Transverse colon (tissue), 4 donors: ENCODE measurements at regions of chr9 and their contacts with region 1.

Region 1: GRCh38 chr9:101311758-101312420 is 72.9 kb downstream of the BAAT start:
- DNase-seq: no peak
- H3K4me3 ChIP-seq: no peak overlapping the region
- H3K27ac ChIP-seq: no peak overlapping the region
- H3K4me1 ChIP-seq: no peaks in the 10 kb centered on the region
- H3K27me3 ChIP-seq: no peaks in the 10 kb centered on the region
- CTCF ChIP-seq: peak; percentile 58 to 73 (median 64)
- EP300 ChIP-seq: no peak
- POLR2A ChIP-seq: no peak

Region 2: GRCh38 chr9:100598641-100599145 is 713.2 kb before region 1 on chr9:
- in situ Hi-C with region 1: loop called in 2 of 4 experiments (anchors 25 kb)
- intact Hi-C with region 1: no loop called
- DNase-seq: peak; percentile 90
- H3K4me3 ChIP-seq: peak overlapping the region; percentile 34 to 47 (median 38)
- H3K27ac ChIP-seq: peak overlapping the region in 3 of 4 donors; percentile 23 to 48 (median 41)
- H3K4me1 ChIP-seq: peaks cover 0 to 8% (median 5%) of the 10 kb centered on the region in 4 donors
- H3K27me3 ChIP-seq: no peaks in the 10 kb centered on the region
- CTCF ChIP-seq: no peak
- EP300 ChIP-seq: no peak
- POLR2A ChIP-seq: no peak

Region 3: GRCh38 chr9:100700689-100701318 is 611.1 kb before region 1 on chr9:
- in situ Hi-C with region 1: loop called in 3 of 4 experiments (anchors 10 to 25 kb)
- intact Hi-C with region 1: no loop called
- DNase-seq: no peak
- H3K4me3 ChIP-seq: no peak overlapping the region
- H3K27ac ChIP-seq: no peak overlapping the region
- H3K4me1 ChIP-seq: no peaks in the 10 kb centered on the region
- H3K27me3 ChIP-seq: no peaks in the 10 kb centered on the region
- CTCF ChIP-seq: peak in 3 of 5 experiments; percentile 20 to 32 (median 29)
- EP300 ChIP-seq: no peak
- POLR2A ChIP-seq: no peak

Region 4: DNA sequence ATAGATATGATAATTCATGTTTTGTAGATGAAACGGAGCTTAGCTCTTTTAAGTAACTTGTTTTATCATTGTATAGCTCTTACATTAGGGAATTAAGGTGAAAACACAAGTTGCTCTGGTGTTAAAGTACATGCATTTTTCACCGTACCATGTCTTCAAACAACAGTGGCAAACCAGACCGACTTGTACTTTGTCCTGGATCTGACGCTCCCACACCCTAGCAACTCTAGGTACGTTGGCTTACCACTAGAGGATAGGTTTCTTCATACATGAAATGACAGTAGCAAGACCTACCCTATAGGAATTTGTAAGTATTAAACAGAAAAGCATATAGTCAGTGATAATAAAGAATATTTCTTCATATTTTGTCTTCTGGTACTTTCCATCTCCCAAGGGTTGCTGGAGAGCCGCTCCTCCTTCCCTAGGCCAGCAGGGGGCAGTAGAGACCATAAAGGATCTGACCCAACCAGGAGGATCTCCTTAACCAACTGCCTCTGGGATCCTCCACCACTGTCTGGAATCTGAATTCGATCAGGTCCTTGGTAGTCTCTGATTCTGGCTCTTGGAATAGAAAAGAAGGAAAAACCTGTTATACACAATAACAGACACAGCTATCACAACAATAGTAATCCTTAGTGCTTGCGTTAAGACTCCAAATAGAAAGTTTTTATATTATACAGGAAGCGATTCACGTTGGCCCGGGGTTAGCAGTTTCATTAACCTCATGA is 597.4 kb before region 1 on chr9:
- in situ Hi-C with region 1: loop called (anchors 10 to 25 kb)
- intact Hi-C with region 1: no loop called
- DNase-seq: peak; percentile 50
- H3K4me3 ChIP-seq: no peak overlapping the region
- H3K27ac ChIP-seq: no peak overlapping the region
- H3K4me1 ChIP-seq: no peaks in the 10 kb centered on the region
- H3K27me3 ChIP-seq: no peaks in the 10 kb centered on the region
- CTCF ChIP-seq: peak; percentile 50 to 80 (median 63)
- EP300 ChIP-seq: no peak
- POLR2A ChIP-seq: no peak